ENCODE measurements at regions of chr2 and their contacts with region 1.

Region 1: DNA sequence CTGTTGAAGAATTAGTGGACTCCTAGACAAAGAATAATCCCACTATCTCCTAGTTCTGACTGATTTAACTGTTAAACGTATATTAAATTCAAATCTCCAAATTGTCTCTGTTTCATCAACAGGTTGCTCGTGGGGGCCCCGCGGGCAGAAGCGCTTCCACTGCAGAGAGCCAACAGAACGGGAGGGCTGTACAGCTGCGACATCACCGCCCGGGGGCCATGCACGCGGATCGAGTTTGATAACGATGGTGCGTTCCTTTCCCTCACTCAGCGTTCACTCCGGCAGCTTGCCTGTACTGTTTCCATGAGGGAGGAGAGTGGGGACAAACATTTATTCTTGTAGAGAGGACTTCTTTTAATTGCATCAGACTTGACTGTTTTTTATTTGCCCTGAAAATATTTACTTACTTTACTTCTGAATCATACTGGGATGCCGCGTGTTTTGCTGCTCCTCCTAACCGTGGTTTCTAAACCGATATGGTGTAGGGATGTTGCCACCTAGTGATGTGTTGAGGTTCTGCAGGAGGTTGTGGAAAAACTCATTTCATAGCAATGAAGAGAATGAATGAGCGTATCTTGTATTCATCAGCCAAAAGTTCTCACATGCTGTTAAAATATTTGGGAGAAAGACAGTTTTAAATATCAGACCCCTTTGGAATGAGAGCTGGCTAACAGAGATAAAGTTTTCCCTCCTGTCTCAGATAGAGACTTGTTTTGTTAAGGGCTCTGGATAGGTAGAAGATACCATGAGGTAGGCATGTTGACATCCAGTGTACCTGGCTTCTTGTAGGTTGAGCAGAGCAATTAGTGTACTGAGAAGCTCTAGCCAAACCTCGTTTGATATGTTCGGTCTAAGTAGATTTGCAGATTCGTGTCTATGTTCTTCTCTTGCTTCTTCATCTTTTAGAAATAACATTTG is 38.3 kb downstream of the ITGA6 start:
- DNase-seq: peak; percentile 47 to 86 (median 76)
- ATAC-seq: peak; percentile 49
- H3K4me3 ChIP-seq: no peak overlapping the region
- H3K4me3 Mint-ChIP-seq: peak overlapping the region; percentile 6
- H3K27ac ChIP-seq: peak overlapping the region; percentile 24 to 66
- H3K27ac Mint-ChIP-seq: peak overlapping the region; percentile 94
- H3K4me1 ChIP-seq: peaks cover 53% of the 10 kb centered on the region
- H3K4me1 Mint-ChIP-seq: peaks cover 74% of the 10 kb centered on the region
- H3K27me3 ChIP-seq: no peaks in the 10 kb centered on the region
- H3K27me3 Mint-ChIP-seq: no peaks in the 10 kb centered on the region
- CTCF ChIP-seq: peak; percentile 94

Region 2: DNA sequence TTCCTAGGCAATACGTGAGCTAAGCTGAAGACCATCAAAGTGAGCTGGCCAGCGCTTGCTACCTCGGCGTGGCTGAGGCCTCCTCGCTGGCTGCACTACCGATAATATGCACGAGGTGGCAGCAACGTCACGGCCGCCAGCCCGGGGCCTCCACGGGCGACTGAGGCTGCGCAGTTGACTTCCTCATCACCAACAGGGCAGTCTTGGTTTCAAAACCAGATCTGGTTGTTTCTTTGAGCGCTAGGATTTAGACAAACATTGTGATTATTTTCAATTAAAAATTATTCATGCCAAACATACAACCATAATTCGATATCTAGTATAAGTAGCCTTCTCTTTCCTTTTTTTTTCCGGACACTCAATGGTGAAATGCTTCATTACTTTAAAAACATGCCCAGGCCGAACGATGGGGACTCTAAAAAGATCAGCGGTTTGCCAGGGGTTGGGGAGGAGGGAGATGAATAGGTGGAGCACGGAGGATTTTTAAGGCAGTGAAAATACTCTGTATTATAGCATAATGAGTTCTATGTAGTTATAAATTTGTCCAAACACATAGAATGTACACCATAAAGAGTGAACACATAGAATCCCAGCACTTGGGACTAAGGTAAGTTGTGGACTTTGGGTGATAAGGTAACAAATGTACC is 891.4 kb before region 1 on chr2:
- CTCF ChIA-PET with region 1: interaction called, 3 read pairs
- POLR2A ChIA-PET with region 1: no interaction called
- intact Hi-C with region 1: loop called in 1 of 2 experiments (anchors 5 kb)
- DNase-seq: peak; percentile 62 to 87 (median 78)
- ATAC-seq: peak; percentile 100
- H3K4me3 ChIP-seq: no peak overlapping the region
- H3K4me3 Mint-ChIP-seq: peak overlapping the region; percentile 42
- H3K27ac ChIP-seq: no peak overlapping the region
- H3K27ac Mint-ChIP-seq: no peak overlapping the region
- H3K4me1 ChIP-seq: no peaks in the 10 kb centered on the region
- H3K4me1 Mint-ChIP-seq: peaks cover 6% of the 10 kb centered on the region
- H3K27me3 ChIP-seq: no peaks in the 10 kb centered on the region
- H3K27me3 Mint-ChIP-seq: peaks cover 2% of the 10 kb centered on the region
- CTCF ChIP-seq: peak; percentile 97

Region 3: DNA sequence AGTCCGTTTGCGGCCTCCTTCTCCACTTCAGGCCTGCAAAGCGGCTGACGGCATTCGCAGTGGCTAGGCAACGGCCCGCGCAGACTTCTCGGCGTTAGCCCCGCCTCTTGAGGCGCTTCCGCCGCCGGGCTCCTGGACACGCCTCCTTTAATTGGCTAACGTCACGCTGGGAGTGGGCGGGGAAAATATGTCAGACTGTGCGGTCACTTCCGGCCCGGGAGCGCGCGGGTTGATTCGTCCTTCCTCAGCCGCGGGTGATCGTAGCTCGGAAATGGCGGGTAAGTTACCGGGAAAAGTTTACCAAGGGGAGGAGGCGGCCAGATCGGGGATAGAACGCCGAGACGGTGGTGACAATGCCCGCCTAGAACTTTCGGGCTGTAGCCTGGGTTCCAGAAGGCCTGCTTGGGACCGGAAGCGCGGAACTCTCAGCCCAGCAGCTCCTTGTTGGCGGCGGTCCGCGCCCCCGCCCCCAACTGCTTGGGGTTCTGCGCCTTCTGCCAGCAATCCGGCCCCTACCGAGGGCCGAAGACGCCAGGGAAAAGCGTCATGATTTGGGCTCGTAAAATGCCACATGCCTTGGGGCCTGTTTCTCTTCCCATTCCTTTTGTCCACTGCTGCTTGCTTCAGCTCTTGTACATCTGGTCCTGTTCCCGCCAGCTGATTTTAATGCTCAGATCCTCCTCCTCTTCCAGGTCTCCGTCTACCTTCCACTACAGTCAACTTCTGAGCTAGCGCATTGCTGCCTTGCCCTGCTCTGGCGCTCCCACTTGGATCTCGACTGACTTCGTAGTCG is 543.2 kb before region 1 on chr2 and contains the start of gene HAT1:
- CTCF ChIA-PET with region 1: no interaction called
- POLR2A ChIA-PET with region 1: no interaction called
- intact Hi-C with region 1: loop called in 1 of 2 experiments (anchors 10 kb)
- DNase-seq: peak; percentile 94 to 99 (median 97)
- ATAC-seq: peak; percentile 98
- H3K4me3 ChIP-seq: peak within 1 kb of the TSS; percentile 82 to 97
- H3K4me3 Mint-ChIP-seq: peak within 1 kb of the TSS; percentile 98
- H3K27ac ChIP-seq: peak within 1 kb of the TSS; percentile 94 to 96
- H3K27ac Mint-ChIP-seq: peak within 1 kb of the TSS; percentile 97
- H3K4me1 ChIP-seq: peaks cover 21% of the 10 kb centered on the region
- H3K4me1 Mint-ChIP-seq: peaks cover 45% of the 10 kb centered on the region
- H3K27me3 ChIP-seq: no peaks in the 10 kb centered on the region
- H3K27me3 Mint-ChIP-seq: no peaks in the 10 kb centered on the region
- CTCF ChIP-seq: no peak
- total RNA-seq, gene HAT1: 29.5 to 30.2 TPM

Region 4: DNA sequence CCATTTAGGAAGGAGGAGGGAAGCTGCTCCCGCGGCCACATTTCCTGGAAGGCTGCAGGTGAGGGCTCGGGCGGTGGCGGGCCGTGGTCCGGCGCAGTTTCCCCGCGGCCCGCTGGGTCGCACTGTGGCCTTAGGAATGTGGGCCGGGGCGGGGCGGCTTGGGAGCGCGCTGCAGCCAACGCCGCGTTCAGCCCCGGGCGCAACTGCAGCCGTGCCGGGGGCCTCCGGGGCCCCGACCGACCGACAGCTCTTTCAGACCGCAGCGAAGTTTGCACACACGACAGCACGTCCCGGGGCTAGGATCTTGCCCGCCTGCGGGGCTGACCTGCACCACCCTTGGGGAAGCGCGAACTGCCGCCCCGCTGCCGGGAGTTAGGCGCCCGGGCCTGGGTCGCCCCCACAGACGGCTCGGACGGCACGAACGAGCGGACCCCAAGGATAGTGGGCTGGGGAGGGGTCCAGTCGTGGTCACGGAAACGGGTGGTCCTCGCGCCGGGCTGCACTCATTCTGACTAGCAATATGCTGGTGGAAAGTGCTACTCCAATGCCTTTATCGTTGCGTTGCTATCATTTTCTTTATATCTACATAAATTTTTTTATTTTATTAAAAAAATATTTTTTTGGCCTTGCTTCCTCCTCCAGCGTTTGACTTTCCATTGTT is 293.0 kb before region 1 on chr2:
- CTCF ChIA-PET with region 1: interaction called, 130 read pairs
- POLR2A ChIA-PET with region 1: interaction called, 7 read pairs
- intact Hi-C with region 1: loop called (anchors 1 kb)
- DNase-seq: peak; percentile 10 to 84 (median 62)
- ATAC-seq: peak; percentile 94
- H3K4me3 ChIP-seq: peak overlapping the region; percentile 57 to 66
- H3K4me3 Mint-ChIP-seq: peak overlapping the region; percentile 68
- H3K27ac ChIP-seq: no peak overlapping the region
- H3K27ac Mint-ChIP-seq: no peak overlapping the region
- H3K4me1 ChIP-seq: peaks cover 4% of the 10 kb centered on the region
- H3K4me1 Mint-ChIP-seq: peaks cover 5% of the 10 kb centered on the region
- H3K27me3 ChIP-seq: no peaks in the 10 kb centered on the region
- H3K27me3 Mint-ChIP-seq: no peaks in the 10 kb centered on the region
- CTCF ChIP-seq: peak; percentile 44

Region 5: DNA sequence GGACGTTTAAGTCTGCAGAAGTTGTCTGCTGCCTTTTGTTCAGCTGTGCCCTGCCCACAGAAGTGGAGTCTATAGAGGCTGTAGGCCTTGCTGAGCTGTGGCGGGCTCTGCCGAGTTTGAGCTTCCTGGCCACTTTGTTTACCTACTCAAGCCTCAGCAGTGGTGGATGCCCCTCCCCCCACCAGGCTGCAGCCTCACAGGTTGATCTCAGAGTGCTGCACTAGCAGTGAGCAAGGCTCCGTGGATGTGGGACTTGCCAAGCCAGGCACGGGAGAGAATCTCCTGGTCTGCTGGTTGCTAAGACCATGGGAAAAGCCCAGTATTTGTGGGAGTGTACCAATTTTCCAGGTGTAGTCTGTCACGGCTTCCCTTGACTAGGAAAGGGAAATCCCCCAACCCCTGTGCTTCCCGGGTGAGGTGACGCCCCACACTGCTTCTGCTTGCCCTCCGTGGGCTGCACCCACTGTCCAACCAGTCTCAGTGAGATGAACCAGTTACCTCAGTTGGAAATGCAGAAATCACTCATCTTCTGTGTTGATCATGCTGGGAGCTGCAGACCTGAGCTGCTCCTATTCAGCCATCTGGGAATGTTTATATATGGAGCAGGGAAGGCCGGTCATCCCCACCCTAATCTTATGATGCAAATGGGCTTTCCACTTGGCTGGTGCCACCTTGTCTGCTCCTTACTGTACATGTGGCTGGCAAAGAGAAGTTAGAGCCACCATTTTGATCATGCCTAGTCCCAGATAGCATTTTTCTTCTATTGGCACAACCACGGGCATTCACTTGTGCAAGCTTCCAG is 195.2 kb before region 1 on chr2:
- CTCF ChIA-PET with region 1: interaction called, 6 read pairs
- POLR2A ChIA-PET with region 1: no interaction called
- intact Hi-C with region 1: loop called in 1 of 2 experiments (anchors 5 kb)
- DNase-seq: peak in 8 of 9 experiments; percentile 20 to 78 (median 36)
- ATAC-seq: no peak
- H3K4me3 ChIP-seq: no peak overlapping the region
- H3K4me3 Mint-ChIP-seq: peak overlapping the region; percentile 29
- H3K27ac ChIP-seq: no peak overlapping the region
- H3K27ac Mint-ChIP-seq: peak overlapping the region; percentile 27
- H3K4me1 ChIP-seq: peaks cover 23% of the 10 kb centered on the region
- H3K4me1 Mint-ChIP-seq: peaks cover 27% of the 10 kb centered on the region
- H3K27me3 ChIP-seq: no peaks in the 10 kb centered on the region
- H3K27me3 Mint-ChIP-seq: no peaks in the 10 kb centered on the region
- CTCF ChIP-seq: no peak

Region 6: DNA sequence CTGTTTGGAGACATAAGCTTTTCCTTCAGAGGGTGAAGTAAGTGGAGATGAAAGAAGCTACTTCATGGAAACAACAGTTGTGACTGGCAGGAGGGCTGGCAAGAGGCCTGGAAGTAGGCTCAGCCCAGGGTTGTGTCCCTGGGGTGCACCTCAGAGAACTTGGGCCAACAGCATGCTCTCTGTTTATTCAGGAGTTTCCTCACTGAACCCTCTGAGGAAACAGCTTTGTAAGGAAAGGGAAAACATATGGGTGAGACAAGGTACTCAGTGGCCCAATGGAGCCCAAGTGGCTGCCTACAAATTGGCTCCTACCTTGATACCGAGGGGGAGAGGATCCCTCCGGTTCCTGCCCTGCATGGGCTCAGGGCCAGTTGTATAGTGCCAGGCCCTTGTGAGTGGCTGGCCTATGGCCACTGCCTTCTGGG is 153.7 kb before region 1 on chr2:
- CTCF ChIA-PET with region 1: no interaction called
- POLR2A ChIA-PET with region 1: no interaction called
- intact Hi-C with region 1: no loop called
- DNase-seq: no peak
- ATAC-seq: no peak
- H3K4me3 ChIP-seq: no peak overlapping the region
- H3K4me3 Mint-ChIP-seq: no peak overlapping the region
- H3K27ac ChIP-seq: no peak overlapping the region
- H3K27ac Mint-ChIP-seq: no peak overlapping the region
- H3K4me1 ChIP-seq: no peaks in the 10 kb centered on the region
- H3K4me1 Mint-ChIP-seq: no peaks in the 10 kb centered on the region
- H3K27me3 ChIP-seq: no peaks in the 10 kb centered on the region
- H3K27me3 Mint-ChIP-seq: peaks cover 2% of the 10 kb centered on the region
- CTCF ChIP-seq: no peak

Region 7: GRCh38 chr2:172442072-172442895 is 23.4 kb before region 1 on chr2:
- CTCF ChIA-PET with region 1: interaction called, 657 read pairs
- POLR2A ChIA-PET with region 1: interaction called, 66 read pairs
- intact Hi-C with region 1: no loop called
- DNase-seq: peak in 7 of 9 experiments; percentile 27 to 66 (median 55)
- ATAC-seq: peak; percentile 45
- H3K4me3 ChIP-seq: peak overlapping the region in 1 of 2 experiments; percentile 50
- H3K4me3 Mint-ChIP-seq: peak overlapping the region; percentile 81
- H3K27ac ChIP-seq: no peak overlapping the region
- H3K27ac Mint-ChIP-seq: peak overlapping the region; percentile 88
- H3K4me1 ChIP-seq: peaks cover 82% of the 10 kb centered on the region
- H3K4me1 Mint-ChIP-seq: peaks cover 53% of the 10 kb centered on the region
- H3K27me3 ChIP-seq: no peaks in the 10 kb centered on the region
- H3K27me3 Mint-ChIP-seq: no peaks in the 10 kb centered on the region
- CTCF ChIP-seq: no peak

Measured in CD8-positive, alpha-beta T cell (primary cell).